HEK293T (cell line): ENCODE measurements at regions of chr12 and their contacts with region 1.

Region 1: DNA sequence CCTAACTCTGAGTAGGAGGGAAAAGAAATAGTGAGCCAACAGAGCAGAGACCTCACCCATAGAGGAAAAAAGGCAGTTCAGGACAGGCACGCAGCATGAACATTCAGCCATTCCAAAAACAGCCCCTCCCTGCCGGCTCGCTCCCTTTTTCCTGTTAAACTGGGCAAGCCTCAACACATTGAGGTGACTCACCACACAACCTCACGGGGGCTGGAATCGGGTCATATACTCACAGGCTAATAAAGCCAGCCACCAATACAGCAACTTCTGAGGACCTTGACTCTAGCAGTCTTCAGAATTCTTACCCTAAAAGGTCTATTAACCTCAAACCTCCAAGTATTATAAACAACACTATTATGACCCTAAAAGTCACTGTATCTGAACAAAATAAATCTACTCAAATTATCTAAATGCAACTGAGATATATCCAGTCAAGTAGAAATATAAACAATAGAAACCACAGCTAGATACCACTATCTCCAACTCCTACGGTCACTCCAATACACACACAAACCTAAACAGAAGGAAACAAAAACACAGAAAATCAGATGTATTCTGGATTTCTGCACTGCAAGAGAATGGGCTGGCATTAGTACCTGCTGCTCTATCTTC is 6.3 kb downstream of the YBX3 start:
- DNase-seq: peak; percentile 70

Region 2: DNA sequence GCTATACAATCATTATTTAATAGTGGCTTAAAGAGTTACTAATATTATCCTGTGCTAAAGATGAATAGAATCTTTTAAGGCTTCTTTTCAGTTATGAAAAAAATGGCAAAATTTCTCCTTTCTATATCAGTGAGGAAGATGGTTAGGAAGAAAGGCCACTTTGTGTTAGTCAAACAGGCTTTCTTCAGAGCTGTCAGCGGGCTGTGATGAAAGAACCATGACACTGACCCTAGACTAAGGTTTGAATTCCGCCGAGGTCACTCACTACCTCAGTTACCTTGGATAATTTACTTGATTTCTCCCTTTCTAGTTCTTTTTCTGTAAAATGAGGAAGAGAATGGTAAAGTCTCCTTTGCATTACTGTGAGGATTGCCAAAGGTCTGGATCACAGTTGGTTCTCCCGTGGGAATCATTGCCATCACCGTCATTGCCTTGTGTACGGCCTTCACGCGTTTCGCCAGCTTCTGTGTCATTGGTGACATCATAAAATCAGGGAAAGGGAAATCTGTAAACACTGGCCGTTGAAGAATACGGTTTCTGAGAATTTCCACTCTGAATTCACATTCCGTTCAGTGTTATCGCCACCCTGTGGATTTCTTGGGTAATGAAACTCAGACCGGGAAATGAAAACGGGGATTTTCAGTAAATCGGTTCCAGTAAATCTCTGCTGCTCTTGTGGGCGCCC is 33.0 kb after region 1 on chr12:
- CTCF ChIA-PET with region 1: interaction called, 14 read pairs
- POLR2A ChIA-PET with region 1: no interaction called
- DNase-seq: peak; percentile 80

Region 3: DNA sequence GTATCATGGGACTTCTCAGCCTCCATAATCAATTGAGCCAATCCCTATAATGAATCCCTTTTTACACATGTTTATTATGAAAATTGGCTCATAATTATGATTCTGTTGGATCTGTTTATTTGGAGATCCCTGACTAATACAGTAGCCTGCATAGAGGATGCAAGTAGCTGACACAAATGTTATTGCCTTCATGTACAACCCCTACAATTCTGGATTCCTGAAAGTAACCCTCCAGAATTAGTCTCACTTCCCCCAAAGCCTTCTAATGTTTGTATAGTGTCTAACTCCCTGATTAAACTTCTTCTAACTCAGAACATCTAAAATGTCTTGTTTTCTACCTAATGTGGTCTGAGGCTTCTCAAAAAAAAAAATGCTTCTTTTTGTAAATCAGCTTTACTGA is 447.6 kb after region 1 on chr12:
- CTCF ChIA-PET with region 1: no interaction called
- POLR2A ChIA-PET with region 1: no interaction called
- DNase-seq: no peak